ENCODE measurements at regions of chr11 and their contacts with region 1.

Region 1: DNA sequence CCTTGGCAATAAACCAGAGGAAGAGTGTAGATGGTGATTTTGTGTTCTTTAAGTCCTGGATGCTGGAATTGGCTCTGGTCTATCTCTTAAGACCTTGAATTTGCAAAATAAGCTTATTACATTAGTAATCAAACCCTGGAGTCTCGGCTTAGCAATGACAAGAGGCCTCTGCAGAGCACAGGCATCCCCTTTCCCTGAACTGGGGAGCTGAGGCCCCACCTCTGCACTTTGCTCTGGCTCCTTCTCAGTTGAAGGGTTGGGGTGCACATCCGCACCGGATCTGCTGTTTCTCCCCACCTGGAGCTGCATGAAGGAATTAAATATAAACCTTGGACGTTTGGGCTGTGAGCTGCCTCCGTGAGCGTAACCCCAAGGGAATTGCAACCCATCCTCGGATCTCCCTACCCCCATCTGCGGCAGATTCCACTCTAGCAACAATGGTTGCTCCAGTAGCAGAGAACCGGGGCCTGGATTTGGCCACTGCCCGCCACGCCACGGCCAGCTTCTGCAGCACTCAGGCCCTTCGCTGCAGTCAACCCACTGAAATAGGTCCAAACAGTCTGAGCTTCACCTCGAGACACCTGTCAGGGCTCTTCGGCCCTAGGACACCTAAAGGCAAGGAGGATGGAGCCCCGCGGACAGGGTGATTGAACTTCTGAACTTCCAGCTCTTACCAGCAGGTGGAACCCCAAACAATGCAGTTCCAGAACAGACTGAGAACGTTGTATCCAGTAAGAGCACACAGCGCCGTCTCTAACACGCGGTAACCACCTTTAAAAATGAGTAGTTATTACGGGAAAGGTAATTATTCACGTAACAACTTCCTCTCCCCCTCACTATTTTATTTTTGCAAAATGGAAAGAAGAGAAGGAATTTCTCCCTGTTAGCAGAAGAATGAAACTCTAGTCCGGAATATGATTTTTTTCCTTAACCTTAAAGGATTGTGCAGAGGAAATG is 54.8 kb upstream of the CAPRIN1 start:
- DNase-seq: peak; percentile 71 to 77 (median 72)
- H3K4me3 ChIP-seq: no peak overlapping the region
- H3K4me3 Mint-ChIP-seq: peak overlapping the region in 6 of 8 donors; percentile 4 to 73 (median 62)
- H3K27ac ChIP-seq: no peak overlapping the region
- H3K27ac Mint-ChIP-seq: no peak overlapping the region
- H3K4me1 ChIP-seq: peaks cover 8% of the 10 kb centered on the region
- H3K4me1 Mint-ChIP-seq: peaks cover 6 to 11% (median 7%) of the 10 kb centered on the region in 4 donors
- H3K27me3 ChIP-seq: no peaks in the 10 kb centered on the region
- H3K27me3 Mint-ChIP-seq: peaks cover 14 to 23% of the 10 kb centered on the region in 2 donors

Region 2: DNA sequence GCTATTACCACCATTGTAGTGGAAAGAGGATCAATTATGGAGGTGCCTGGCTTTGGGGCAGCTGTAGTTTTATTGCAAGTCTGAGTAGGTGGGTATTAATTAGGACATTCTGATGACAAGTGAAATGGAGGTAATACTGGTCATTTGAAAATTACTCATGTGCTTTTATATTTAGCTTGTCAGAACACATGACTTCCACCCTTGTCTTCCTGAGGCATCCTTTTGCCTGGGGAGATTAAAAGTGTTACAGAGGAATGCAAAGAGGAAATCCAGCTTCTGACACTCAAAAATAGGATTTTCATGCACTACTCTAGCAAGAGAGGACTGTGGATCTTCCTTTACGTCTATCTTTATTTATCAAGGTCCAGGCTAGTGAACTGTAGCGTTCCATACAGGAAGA is 10.1 kb after region 1 on chr11:
- CTCF ChIA-PET with region 1: interaction called, 19 read pairs
- POLR2A ChIA-PET with region 1: no interaction called
- intact Hi-C with region 1: no loop called
- DNase-seq: no peak
- H3K4me3 ChIP-seq: no peak overlapping the region
- H3K4me3 Mint-ChIP-seq: no peak overlapping the region
- H3K27ac ChIP-seq: no peak overlapping the region
- H3K27ac Mint-ChIP-seq: no peak overlapping the region
- H3K4me1 ChIP-seq: no peaks in the 10 kb centered on the region
- H3K4me1 Mint-ChIP-seq: no peaks in the 10 kb centered on the region
- H3K27me3 ChIP-seq: no peaks in the 10 kb centered on the region
- H3K27me3 Mint-ChIP-seq: peaks cover 10 to 11% of the 10 kb centered on the region in 2 donors

Region 3: DNA sequence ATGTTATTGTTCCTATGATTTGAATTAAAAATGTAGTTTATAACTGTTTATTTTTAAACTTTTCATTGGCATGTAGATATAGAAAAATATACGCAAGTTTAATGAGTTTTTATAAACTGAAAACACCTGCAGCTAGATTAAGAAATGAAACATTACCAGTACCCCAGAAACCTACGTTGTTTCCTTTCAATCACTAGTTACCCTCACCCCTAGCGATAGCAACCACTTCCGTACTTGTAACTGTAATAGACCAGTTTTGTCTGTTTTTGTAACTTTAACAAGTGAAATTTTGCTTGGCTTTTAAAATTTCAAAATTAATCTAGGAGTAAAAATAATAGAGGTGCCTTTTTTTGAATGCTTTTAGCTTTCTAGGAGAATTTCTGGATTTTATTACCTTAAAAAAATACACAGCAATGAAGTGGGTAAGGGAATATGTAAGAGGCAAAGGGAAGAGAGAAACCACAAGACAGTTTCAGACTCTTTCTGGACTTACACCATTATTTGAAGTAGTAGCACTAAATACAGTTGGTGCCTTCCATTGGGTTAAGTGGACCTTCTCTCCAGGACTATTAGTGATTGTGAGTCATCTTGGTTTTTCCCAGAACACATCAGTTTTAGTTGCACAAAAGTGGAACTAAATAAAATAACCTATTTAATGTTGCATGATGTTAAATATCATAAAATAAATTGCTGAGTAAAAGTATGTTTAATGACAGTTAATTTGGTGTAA is 89.9 kb after region 1 on chr11:
- CTCF ChIA-PET with region 1: interaction called, 7 read pairs
- POLR2A ChIA-PET with region 1: no interaction called
- intact Hi-C with region 1: loop called (anchors 5 kb)
- DNase-seq: peak in 4 of 5 donors; percentile 22 to 43 (median 30)
- H3K4me3 ChIP-seq: no peak overlapping the region
- H3K4me3 Mint-ChIP-seq: peak overlapping the region in 6 of 8 donors; percentile 25 to 67 (median 39)
- H3K27ac ChIP-seq: peak overlapping the region; percentile 35
- H3K27ac Mint-ChIP-seq: peak overlapping the region; percentile 49 to 93 (median 86)
- H3K4me1 ChIP-seq: peaks cover 15% of the 10 kb centered on the region
- H3K4me1 Mint-ChIP-seq: peaks cover 11 to 33% (median 23%) of the 10 kb centered on the region in 4 donors
- H3K27me3 ChIP-seq: no peaks in the 10 kb centered on the region
- H3K27me3 Mint-ChIP-seq: no peaks in the 10 kb centered on the region

Measured in CD4-positive, alpha-beta memory T cell (primary cell).